HEK293T (cell line): ENCODE measurements at regions of chr19 and their contacts with region 1.

Region 1: DNA sequence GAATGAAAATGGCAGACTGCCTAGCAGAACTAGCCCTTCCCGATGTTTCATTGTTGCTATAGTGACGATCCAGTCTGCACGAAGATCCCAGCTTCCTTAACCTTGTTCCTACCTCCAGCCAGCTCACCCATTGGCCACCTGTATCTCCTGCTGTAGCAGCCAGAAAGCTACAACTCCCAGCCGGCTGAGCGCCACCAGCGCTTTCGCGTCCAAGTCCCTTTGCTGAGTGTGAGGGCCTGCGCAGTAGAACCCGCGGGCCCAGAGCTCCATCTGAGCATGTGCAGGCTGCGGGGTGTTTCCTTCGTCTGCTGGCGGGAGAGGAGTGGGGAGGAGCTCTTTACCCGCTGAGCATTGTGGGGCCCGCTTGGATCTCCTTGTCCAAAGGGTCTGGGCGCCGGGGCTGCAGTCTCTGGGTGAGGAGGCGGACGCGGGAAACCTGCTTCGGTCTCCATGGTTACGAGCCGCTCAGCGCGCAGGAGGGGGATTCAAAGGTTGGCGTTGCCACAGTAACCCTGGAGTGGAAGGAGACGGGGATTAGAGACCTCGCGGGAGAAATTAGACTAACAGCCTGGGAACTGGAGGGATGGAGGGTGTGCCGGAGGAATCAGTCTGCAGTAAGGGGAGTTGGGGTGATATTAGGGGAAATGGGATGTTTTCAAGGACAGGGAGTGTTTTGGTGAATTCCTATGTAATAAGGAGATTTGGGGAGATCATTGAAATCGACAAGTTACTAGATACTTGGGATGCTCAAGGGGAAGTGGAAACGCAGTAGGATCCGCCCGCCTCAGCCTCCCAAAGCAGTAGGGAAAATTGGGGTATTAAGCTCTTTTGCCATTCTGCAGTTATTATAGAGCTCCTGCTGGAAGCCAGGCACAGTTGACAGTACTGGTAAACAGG is 33.5 kb downstream of the ZSWIM9 start:
- DNase-seq: peak; percentile 94

Region 2: GRCh38 chr19:48064509-48064908 is 139.5 kb before region 1 on chr19:
- CTCF ChIA-PET with region 1: no interaction called
- POLR2A ChIA-PET with region 1: no interaction called
- DNase-seq: no peak

Region 3: GRCh38 chr19:48110350-48110966 is 93.5 kb before region 1 on chr19 and contains the start of gene PLA2G4C:
- CTCF ChIA-PET with region 1: no interaction called
- POLR2A ChIA-PET with region 1: interaction called, 17 read pairs
- DNase-seq: peak; percentile 93

Region 4: DNA sequence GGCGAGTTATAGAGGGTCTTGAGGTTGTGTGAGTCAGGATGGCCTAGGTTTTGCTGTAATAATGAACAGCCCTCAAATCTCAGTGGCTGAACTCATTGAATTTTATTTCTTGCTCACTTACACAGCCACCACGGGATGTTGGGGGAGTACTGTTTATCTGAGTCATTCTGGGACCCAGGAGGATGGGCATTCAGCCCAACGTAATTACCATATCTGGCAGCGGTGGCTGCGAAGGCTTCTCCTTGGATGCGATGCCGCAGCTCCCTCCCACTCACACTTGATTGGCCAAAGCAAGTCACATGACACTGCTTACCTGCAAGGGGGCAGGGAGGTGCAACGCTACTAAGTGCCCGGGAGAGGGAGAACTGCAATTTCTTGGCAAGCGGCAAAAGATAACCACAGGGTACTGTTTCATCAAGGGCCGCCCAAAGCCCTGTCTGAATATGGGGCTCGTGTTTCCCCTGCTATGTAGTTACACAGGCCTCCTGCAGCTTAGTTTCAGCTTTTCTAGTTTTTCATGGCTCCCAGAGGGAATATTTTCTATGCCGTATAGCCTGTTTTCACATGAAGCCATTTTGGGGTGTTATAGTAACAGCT is 13.6 kb before region 1 on chr19:
- CTCF ChIA-PET with region 1: interaction called, 11 read pairs
- POLR2A ChIA-PET with region 1: interaction called, 12 read pairs
- DNase-seq: peak; percentile 85

Region 5: GRCh38 chr19:48218997-48219396 is 15.0 kb after region 1 on chr19:
- CTCF ChIA-PET with region 1: no interaction called
- POLR2A ChIA-PET with region 1: interaction called, 10 read pairs
- DNase-seq: no peak

Region 6: DNA sequence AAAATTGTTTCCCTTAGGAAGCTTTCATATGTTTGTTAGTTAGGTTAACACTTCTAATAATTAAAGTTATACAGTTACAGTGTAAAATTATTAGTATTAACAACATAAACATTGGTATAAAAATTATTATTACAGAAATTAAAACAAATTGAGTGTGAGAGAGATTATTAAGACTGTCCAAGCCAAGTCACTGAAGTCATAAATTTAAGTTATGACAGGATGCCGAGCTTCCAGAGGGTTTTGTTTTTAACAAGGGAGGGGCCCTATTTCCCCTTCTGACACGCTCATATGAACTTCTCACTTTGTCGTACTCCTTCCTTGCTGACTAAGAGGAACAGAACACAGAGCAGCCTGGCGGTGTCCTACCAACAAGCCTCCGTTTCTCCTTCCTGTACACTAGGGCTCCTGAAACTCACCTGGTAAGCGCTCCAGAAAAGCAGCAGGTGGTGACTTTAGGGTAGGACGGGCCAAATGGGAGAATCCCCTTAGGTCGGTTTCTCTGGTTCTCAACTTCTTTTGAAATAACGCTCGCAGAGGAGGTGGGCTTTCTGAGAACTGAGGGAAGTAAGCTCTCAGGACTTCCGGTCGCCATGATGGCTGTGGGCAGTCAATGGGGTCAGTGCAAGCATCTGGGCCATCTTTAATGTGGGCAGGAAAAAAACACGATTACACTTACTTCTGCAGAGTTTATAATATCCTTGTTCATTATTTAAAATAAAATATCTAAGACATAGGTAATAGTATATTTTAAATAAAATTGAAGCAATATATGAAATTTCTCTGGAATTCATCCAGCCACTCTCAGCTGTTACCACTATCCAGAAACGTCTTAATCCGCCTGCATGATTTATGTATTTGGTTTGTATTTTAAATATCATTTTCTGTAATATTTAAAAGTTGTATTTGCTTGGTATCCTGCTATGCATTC is 51.7 kb after region 1 on chr19 and contains the start of gene CARD8:
- CTCF ChIA-PET with region 1: no interaction called
- POLR2A ChIA-PET with region 1: interaction called, 22 read pairs
- DNase-seq: peak; percentile 63